ENCODE measurements at regions of chr3 and their contacts with region 1.

Region 1: DNA sequence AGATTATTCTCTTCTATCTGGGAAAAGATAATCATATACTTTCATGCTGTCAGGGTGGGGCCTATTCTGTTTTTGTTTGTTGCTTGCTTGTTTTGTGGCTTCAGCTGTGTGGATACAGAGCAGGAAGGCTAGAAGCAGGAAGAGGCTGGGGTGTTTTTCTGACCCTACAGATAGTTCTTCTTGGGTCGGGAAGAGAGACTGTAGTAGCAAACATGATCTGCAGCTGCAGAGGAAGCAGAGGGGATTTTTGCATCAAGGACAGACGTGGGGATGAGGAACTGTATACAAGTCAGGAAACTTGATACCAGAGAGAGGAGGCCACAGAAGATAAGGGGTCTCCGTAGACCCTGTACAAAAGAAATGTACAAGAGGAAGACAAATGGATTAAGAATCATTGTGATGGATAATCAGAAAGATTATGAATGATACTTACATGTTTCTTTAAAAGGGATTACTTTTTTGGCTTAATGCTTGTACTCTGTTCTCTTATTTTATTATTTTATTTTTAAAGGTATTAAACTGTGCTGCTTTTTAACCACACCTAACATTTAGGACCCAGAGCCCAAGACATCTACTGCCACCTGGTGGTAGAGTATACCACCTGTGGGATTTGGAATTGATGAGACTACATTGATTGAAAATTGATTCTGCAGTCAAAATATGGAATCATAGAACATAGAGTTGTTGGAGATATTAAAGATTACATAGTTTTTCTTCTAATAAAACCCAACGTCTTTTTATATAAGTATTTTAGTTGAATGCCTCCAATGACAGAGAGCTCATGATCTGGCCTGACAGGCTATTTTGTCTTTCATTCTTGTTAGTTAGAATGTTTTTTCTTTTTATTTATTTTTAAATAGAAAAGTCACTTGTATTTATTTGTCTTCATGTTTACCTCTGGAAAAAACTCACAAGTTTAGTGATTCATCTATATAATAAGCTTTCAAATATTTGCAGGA is 87.3 kb upstream of the ROPN1 start:
- DNase-seq: peak in 1 of 3 donors; percentile 71
- ATAC-seq: peak; percentile 62
- H3K4me3 ChIP-seq: no peak overlapping the region
- H3K4me1 ChIP-seq: no peaks in the 10 kb centered on the region
- CTCF ChIP-seq: peak; percentile 60

Region 2: DNA sequence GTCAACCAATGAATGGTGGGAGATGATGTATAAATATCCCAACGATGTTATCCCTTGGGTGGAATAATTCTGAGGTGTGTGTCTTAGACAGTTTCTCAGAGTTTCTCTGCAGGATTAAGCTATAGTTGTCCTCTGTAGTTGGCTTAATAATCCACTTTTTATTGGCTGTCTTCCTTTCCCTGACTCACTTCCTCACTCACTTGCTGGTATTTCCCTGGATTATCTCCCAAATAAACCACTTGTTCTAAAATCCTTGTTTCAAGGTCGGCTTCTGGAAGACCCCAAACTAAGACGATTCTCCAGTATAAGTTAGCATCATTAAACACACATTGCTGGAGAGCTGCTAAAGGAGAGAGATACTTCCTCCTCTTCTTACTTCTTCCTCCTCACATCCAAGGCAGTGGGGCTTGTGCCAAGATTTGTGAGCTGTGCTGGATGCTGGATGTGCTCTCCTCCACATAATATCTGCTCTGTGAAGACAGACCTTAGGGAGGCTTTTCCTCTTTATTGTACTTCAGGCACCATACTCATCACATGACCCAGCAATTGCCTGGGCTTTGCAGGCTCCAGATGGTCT is 64.8 kb before region 1 on chr3:
- intact Hi-C with region 1: loop called (anchors 10 kb)
- DNase-seq: no peak
- ATAC-seq: no peak
- H3K4me3 ChIP-seq: no peak overlapping the region
- H3K4me1 ChIP-seq: no peaks in the 10 kb centered on the region
- CTCF ChIP-seq: no peak

Region 3: DNA sequence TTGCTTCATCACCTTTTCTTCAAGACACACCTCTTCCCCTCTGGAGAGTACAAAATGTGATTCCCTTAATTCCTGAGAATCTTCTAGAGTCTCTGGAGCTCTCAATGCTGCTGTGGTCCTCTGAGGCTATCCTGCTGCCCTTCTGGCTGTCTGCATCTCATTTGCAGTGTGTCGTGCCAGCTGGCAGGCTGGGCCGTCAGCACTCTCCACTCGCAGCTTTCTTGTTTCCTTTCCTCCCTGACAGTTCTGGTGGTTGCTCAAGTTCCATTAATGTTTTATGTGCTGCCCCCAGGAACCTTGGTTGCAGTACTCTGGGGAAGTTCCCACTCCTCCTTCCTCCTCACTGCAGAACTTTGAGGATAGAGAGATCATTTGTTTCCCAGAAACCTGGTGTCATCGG is 123.5 kb after region 1 on chr3:
- intact Hi-C with region 1: no loop called
- DNase-seq: peak in 2 of 3 donors; percentile 28 to 39
- ATAC-seq: peak; percentile 38
- H3K4me3 ChIP-seq: no peak overlapping the region
- H3K4me1 ChIP-seq: peaks cover 8% of the 10 kb centered on the region
- CTCF ChIP-seq: no peak

Region 4: DNA sequence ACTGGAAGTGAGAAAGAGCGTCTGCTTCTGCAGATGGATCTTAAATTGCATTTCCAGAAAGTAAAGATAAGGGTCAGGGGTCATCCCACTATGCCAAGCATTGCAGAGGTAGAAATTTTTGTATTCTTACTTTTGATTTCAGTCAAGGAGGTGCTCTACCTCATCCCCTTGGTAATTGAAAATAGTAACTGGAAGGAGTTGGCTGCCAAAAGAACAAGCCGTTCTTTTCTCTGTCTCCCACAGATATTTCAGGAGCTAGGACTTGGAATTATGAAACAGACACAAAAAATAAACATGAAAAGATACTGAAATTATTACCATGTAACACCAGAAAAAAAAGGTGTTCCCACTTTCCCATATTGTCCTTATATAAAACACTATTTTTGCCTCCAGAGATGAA is 341.2 kb after region 1 on chr3:
- intact Hi-C with region 1: no loop called
- DNase-seq: no peak
- ATAC-seq: no peak
- H3K4me3 ChIP-seq: no peak overlapping the region
- H3K4me1 ChIP-seq: no peaks in the 10 kb centered on the region
- CTCF ChIP-seq: no peak